Activated CD4-positive, alpha-beta memory T cell treated with anti-CD3 and anti-CD28 coated beads, Interleukin-2, amount 10 ng/mL, durations not matched to agents 7 days and 5 days (primary cell): ENCODE measurements at regions of chr5 and their contacts with region 1.

Region 1: GRCh38 chr5:91419571-91420537 is 36.7 kb upstream of the ARRDC3 start:
- DNase-seq: peak; percentile 72
- H3K4me3 Mint-ChIP-seq: no peak overlapping the region
- H3K27ac Mint-ChIP-seq: no peak overlapping the region
- H3K4me1 Mint-ChIP-seq: peaks cover 9% of the 10 kb centered on the region
- H3K27me3 Mint-ChIP-seq: peaks cover 3% of the 10 kb centered on the region

Region 2: GRCh38 chr5:90866333-90866732 is 553.5 kb before region 1 on chr5:
- CTCF ChIA-PET with region 1: interaction called, 27 read pairs
- POLR2A ChIA-PET with region 1: no interaction called
- DNase-seq: no peak
- H3K4me3 Mint-ChIP-seq: no peak overlapping the region
- H3K27ac Mint-ChIP-seq: no peak overlapping the region
- H3K4me1 Mint-ChIP-seq: peaks cover 2% of the 10 kb centered on the region
- H3K27me3 Mint-ChIP-seq: peaks cover 27% of the 10 kb centered on the region

Region 3: DNA sequence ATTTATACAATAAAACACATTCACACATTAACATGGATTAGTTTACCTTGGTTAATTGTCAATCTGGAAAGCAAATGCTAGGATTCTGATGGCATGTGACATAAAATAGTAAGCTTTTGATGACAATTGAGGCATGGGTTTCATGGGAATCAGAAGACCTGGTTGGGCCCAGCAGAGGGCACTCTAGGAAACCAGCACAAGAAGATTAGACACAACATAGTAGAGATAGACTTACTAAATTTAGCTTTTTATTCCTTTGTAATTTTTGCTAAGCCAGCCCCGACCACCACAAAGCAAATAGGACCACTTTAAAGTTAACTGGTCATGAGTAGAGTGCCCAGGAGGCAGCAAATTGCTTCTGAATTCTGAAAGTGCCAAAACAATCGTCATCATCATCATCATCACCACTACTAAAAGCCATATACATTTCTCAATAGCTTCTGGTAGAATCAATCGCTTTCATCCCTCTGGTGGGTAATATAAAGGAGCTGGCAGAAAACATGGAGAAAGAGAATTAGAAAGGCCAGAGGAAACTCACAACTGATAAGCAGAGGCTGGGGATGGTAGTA is 200.0 kb before region 1 on chr5:
- CTCF ChIA-PET with region 1: interaction called, 55 read pairs
- POLR2A ChIA-PET with region 1: interaction called, 4 read pairs
- DNase-seq: peak; percentile 39
- H3K4me3 Mint-ChIP-seq: no peak overlapping the region
- H3K27ac Mint-ChIP-seq: no peak overlapping the region
- H3K4me1 Mint-ChIP-seq: peaks cover 3% of the 10 kb centered on the region
- H3K27me3 Mint-ChIP-seq: peaks cover 4% of the 10 kb centered on the region

Region 4: GRCh38 chr5:91245871-91246270 is 174.0 kb before region 1 on chr5:
- CTCF ChIA-PET with region 1: no interaction called
- POLR2A ChIA-PET with region 1: no interaction called
- DNase-seq: no peak
- H3K4me3 Mint-ChIP-seq: no peak overlapping the region
- H3K27ac Mint-ChIP-seq: no peak overlapping the region
- H3K4me1 Mint-ChIP-seq: peaks cover 5% of the 10 kb centered on the region
- H3K27me3 Mint-ChIP-seq: no peaks in the 10 kb centered on the region

Region 5: DNA sequence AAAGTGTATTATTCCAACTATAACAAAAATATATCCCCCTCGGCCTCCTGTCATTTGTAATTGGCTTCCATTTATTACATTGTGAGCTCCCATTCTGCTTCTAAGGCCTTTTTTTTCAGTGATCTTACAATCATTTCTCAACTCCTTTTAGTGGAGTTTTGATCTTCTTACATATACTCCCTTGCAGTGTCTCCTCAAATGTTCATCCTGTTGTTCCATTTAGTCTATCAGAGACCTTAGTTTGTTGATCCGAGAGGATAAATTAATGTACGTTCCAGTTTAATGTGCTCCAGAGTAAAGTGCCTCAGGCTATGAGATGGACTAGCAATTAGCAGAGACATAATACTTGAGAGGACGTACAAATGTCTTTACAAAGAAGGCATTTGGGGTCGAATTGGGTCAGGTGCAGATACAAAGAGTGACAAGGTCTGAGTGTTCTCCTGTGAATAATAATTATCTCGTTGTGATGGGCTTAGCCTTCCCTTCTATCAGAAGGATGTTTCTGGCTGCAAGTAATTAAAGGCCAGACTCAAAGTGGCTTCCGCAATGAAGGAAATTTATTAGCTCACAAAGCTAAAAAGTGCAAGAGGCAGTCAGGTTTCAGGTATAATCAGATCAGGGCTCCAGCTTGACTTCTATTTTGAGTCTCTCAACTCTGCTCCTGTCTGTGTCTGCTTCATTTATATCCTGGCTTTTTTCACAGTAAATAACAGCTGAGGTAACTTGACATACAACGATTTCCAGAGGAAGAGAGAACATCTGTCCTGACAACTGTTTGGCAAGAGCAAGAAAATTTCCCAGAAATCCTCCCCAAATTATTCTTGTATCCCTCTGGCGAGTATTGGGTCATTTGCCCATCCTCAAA is 66.8 kb before region 1 on chr5:
- CTCF ChIA-PET with region 1: no interaction called
- POLR2A ChIA-PET with region 1: no interaction called
- DNase-seq: no peak
- H3K4me3 Mint-ChIP-seq: no peak overlapping the region
- H3K27ac Mint-ChIP-seq: no peak overlapping the region
- H3K4me1 Mint-ChIP-seq: no peaks in the 10 kb centered on the region
- H3K27me3 Mint-ChIP-seq: peaks cover 28% of the 10 kb centered on the region

Region 6: GRCh38 chr5:91397791-91398190 is 22.1 kb before region 1 on chr5:
- CTCF ChIA-PET with region 1: interaction called, 16 read pairs
- POLR2A ChIA-PET with region 1: no interaction called
- DNase-seq: no peak
- H3K4me3 Mint-ChIP-seq: no peak overlapping the region
- H3K27ac Mint-ChIP-seq: no peak overlapping the region
- H3K4me1 Mint-ChIP-seq: peaks cover 11% of the 10 kb centered on the region
- H3K27me3 Mint-ChIP-seq: no peaks in the 10 kb centered on the region

Region 7: DNA sequence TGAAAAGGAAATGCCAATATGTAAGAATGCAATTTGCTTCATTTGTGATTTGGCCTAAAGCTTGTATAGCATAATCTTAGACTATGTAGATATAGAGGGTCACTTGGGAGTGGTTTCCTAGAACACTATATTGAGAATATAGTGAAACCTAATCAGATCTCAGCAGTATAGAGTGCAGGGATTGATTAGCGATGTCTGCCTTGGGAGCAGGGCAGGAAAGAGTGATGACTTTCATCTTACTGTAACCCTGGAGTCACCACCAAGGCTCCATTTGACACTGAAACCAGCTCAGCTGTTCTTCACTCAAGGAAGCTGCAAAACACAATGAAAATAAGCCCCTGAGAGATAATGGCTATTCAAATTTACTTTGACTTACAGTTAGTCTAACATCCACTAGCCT is 10.6 kb before region 1 on chr5:
- CTCF ChIA-PET with region 1: interaction called, 15 read pairs
- POLR2A ChIA-PET with region 1: no interaction called
- DNase-seq: no peak
- H3K4me3 Mint-ChIP-seq: no peak overlapping the region
- H3K27ac Mint-ChIP-seq: no peak overlapping the region
- H3K4me1 Mint-ChIP-seq: no peaks in the 10 kb centered on the region
- H3K27me3 Mint-ChIP-seq: no peaks in the 10 kb centered on the region